H1 (cell line): ENCODE measurements at regions of chr14 and their contacts with region 1.

Region 1: GRCh38 chr14:75293920-75294642 is 15.5 kb downstream of the FOS start:
- DNase-seq: peak in 1 of 2 experiments; percentile 94
- H3K4me3 ChIP-seq: peak overlapping the region; percentile 61 to 87 (median 75)
- H3K27ac ChIP-seq: peak overlapping the region; percentile 98
- H3K4me1 ChIP-seq: peaks cover 3 to 12% (median 9%) of the 10 kb centered on the region in 4 experiments
- H3K27me3 ChIP-seq: no peaks in the 10 kb centered on the region
- CTCF ChIP-seq: 0 out of 4 replicates have a peak, but pooled peaks of 1 of the 3 experiments have one; percentile 0
- EP300 ChIP-seq: peak in 1 of 2 experiments; percentile 89; a peak in 1 of 3 replicates
- POLR2A ChIP-seq: peak; percentile 47 to 80
- RAD21 ChIP-seq: peak in 1 of 2 experiments; percentile 14; a peak in 1 of 4 replicates

Region 2: GRCh38 chr14:75132382-75133086 is 161.5 kb before region 1 on chr14:
- CTCF ChIA-PET with region 1: interaction called, 67 read pairs
- POLR2A ChIA-PET with region 1: interaction called, 3 read pairs
- DNase-seq: peak in 1 of 2 experiments; percentile 66
- H3K4me3 ChIP-seq: no peak overlapping the region
- H3K27ac ChIP-seq: no peak overlapping the region
- H3K4me1 ChIP-seq: peaks cover 0 to 2% (median 0%) of the 10 kb centered on the region in 4 experiments; a peak in 2 of 7 replicates
- H3K27me3 ChIP-seq: no peaks in the 10 kb centered on the region
- CTCF ChIP-seq: peak in 2 of 3 experiments; percentile 76 to 77; a peak in 3 of 4 replicates
- EP300 ChIP-seq: no peak
- POLR2A ChIP-seq: no peak
- RAD21 ChIP-seq: peak; percentile 89 to 92

Region 3: GRCh38 chr14:75156901-75157530 is 137.1 kb before region 1 on chr14:
- CTCF ChIA-PET with region 1: interaction called, 14 read pairs
- POLR2A ChIA-PET with region 1: interaction called, 5 read pairs
- DNase-seq: no peak
- H3K4me3 ChIP-seq: no peak overlapping the region
- H3K27ac ChIP-seq: no peak overlapping the region
- H3K4me1 ChIP-seq: peaks cover 0 to 3% (median 0%) of the 10 kb centered on the region in 4 experiments; a peak in 3 of 7 replicates
- H3K27me3 ChIP-seq: no peaks in the 10 kb centered on the region
- CTCF ChIP-seq: no peak
- EP300 ChIP-seq: no peak
- POLR2A ChIP-seq: no peak
- RAD21 ChIP-seq: no peak

Region 4: GRCh38 chr14:75267141-75267721 is 26.9 kb before region 1 on chr14:
- CTCF ChIA-PET with region 1: interaction called, 9 read pairs
- POLR2A ChIA-PET with region 1: interaction called, 351 read pairs
- DNase-seq: no peak
- H3K4me3 ChIP-seq: no peak overlapping the region
- H3K27ac ChIP-seq: no peak overlapping the region
- H3K4me1 ChIP-seq: peaks cover 4 to 7% (median 6%) of the 10 kb centered on the region in 4 experiments; a peak in 5 of 7 replicates
- H3K27me3 ChIP-seq: no peaks in the 10 kb centered on the region
- CTCF ChIP-seq: no peak
- EP300 ChIP-seq: no peak
- POLR2A ChIP-seq: no peak
- RAD21 ChIP-seq: no peak